Caco-2 (cell line): ENCODE measurements at regions of chr6 and their contacts with region 1.

Region 1: GRCh38 chr6:95203153-95203754 is 374.1 kb upstream of the MANEA start:
- DNase-seq: peak in 1 of 2 experiments; percentile 31
- H3K4me3 ChIP-seq: no peak overlapping the region
- H3K4me3 Mint-ChIP-seq: no peak overlapping the region
- H3K27ac Mint-ChIP-seq: no peak overlapping the region
- H3K4me1 ChIP-seq: no peaks in the 10 kb centered on the region
- H3K4me1 Mint-ChIP-seq: no peaks in the 10 kb centered on the region
- H3K27me3 ChIP-seq: no peaks in the 10 kb centered on the region
- H3K27me3 Mint-ChIP-seq: no peaks in the 10 kb centered on the region
- CTCF ChIP-seq: peak; percentile 68 to 75

Region 2: DNA sequence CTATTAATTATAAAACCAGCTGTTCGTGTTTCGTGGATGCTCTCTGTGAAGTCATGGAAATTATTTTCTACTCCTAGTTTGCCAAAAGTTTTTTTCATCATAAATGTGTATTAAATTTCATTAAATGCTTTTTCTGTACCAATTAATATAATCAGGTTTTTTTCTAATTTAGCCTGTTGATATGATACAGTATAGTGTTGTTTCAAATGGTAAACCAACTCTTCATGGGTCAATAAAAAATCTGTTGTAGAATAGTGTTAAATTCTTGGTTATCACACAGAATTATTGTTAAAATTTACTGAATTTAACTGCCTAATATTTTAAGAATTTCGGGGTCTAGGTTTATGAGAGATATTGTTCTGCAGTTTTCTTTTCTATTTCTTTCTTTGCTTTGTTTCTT is 131.8 kb before region 1 on chr6:
- CTCF ChIA-PET with region 1: no interaction called
- POLR2A ChIA-PET with region 1: no interaction called
- intact Hi-C with region 1: no loop called
- DNase-seq: no peak
- H3K4me3 ChIP-seq: no peak overlapping the region
- H3K4me3 Mint-ChIP-seq: no peak overlapping the region
- H3K27ac Mint-ChIP-seq: no peak overlapping the region
- H3K4me1 ChIP-seq: no peaks in the 10 kb centered on the region
- H3K4me1 Mint-ChIP-seq: no peaks in the 10 kb centered on the region
- H3K27me3 ChIP-seq: no peaks in the 10 kb centered on the region
- H3K27me3 Mint-ChIP-seq: no peaks in the 10 kb centered on the region
- CTCF ChIP-seq: no peak

Region 3: DNA sequence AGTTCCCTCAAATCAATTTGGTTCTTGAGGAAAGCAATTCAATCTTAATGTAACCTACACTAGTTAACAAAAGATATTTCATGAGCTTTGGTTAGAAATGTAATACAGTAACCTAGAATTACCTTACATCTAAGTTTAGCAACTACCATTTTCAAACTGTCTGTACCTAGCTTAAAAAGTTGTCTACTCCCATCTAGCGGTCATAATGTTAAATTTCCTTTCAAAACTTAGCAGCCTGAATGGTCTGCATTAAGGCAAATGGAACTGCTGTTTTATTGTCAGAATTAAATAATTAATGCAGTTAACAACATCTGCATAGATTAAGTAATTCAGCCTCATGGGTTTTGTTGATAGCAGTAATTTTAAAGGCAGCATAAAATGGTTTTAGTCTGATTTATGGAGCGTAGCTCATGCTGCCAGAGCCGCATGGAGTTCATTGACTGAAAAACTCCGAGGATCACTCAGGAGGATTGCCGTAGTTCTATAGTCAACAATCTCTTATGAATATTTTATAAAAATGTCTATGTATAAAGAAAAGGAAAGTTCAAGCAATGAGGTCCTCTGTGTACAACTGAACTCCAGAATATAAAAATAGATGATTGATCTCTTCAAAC is 111.3 kb before region 1 on chr6:
- CTCF ChIA-PET with region 1: no interaction called
- POLR2A ChIA-PET with region 1: no interaction called
- intact Hi-C with region 1: no loop called
- DNase-seq: peak in 1 of 2 experiments; percentile 26
- H3K4me3 ChIP-seq: no peak overlapping the region
- H3K4me3 Mint-ChIP-seq: no peak overlapping the region
- H3K27ac Mint-ChIP-seq: no peak overlapping the region
- H3K4me1 ChIP-seq: peaks cover 4% of the 10 kb centered on the region; the same call in 1 of the 2 replicates
- H3K4me1 Mint-ChIP-seq: peaks cover 15% of the 10 kb centered on the region
- H3K27me3 ChIP-seq: no peaks in the 10 kb centered on the region
- H3K27me3 Mint-ChIP-seq: no peaks in the 10 kb centered on the region
- CTCF ChIP-seq: peak; percentile 47 to 57

Region 4: DNA sequence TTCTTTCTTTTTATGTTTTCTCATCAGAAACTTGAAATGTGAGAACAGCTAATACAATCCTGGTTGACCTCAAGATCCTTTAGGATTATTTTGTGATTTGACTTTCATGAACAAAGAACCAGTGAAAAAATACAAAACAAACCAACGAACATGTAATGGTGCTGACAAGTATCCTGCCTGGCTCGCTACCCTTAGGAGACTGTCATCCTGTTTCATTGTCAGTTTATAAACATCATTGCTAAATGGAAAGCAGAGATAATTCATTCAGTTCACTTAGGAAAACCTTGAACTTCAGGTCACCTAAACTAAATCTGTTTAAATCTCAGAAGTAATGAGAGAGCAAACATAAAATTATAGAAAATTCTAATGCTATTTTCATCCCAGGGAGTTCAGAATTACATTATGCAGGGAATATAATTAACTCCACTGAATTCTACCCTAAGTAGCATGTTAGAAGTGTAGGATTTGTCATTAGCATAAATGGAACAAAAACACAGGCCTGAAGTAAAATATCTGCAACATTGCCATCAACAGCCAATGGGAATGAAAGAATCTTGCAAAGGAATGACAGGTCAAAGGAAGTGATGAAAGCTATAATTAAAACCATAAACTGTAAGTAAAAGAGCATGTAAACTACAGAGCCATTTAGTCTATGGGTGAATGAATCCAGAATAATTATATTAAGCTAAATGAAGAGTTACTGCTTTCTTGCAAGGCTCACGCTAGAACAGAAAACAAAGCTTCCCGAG is 27.2 kb before region 1 on chr6:
- CTCF ChIA-PET with region 1: no interaction called
- POLR2A ChIA-PET with region 1: no interaction called
- intact Hi-C with region 1: no loop called
- DNase-seq: no peak
- H3K4me3 ChIP-seq: no peak overlapping the region
- H3K4me3 Mint-ChIP-seq: no peak overlapping the region
- H3K27ac Mint-ChIP-seq: no peak overlapping the region
- H3K4me1 ChIP-seq: no peaks in the 10 kb centered on the region
- H3K4me1 Mint-ChIP-seq: no peaks in the 10 kb centered on the region
- H3K27me3 ChIP-seq: no peaks in the 10 kb centered on the region
- H3K27me3 Mint-ChIP-seq: no peaks in the 10 kb centered on the region
- CTCF ChIP-seq: no peak

Region 5: GRCh38 chr6:95280690-95281273 is 77.5 kb after region 1 on chr6:
- CTCF ChIA-PET with region 1: interaction called, 6 read pairs
- POLR2A ChIA-PET with region 1: no interaction called
- intact Hi-C with region 1: loop called (anchors 1 kb)
- DNase-seq: peak in 1 of 2 experiments; percentile 25
- H3K4me3 ChIP-seq: no peak overlapping the region
- H3K4me3 Mint-ChIP-seq: no peak overlapping the region
- H3K27ac Mint-ChIP-seq: no peak overlapping the region
- H3K4me1 ChIP-seq: no peaks in the 10 kb centered on the region
- H3K4me1 Mint-ChIP-seq: peaks cover 13% of the 10 kb centered on the region
- H3K27me3 ChIP-seq: no peaks in the 10 kb centered on the region
- H3K27me3 Mint-ChIP-seq: no peaks in the 10 kb centered on the region
- CTCF ChIP-seq: peak in 1 of 2 experiments; percentile 28

Region 6: GRCh38 chr6:95352064-95352795 is 149.0 kb after region 1 on chr6:
- CTCF ChIA-PET with region 1: no interaction called
- POLR2A ChIA-PET with region 1: no interaction called
- intact Hi-C with region 1: loop called (anchors 1 kb)
- DNase-seq: no peak
- H3K4me3 ChIP-seq: no peak overlapping the region
- H3K4me3 Mint-ChIP-seq: no peak overlapping the region
- H3K27ac Mint-ChIP-seq: no peak overlapping the region
- H3K4me1 ChIP-seq: no peaks in the 10 kb centered on the region
- H3K4me1 Mint-ChIP-seq: no peaks in the 10 kb centered on the region
- H3K27me3 ChIP-seq: no peaks in the 10 kb centered on the region
- H3K27me3 Mint-ChIP-seq: no peaks in the 10 kb centered on the region
- CTCF ChIP-seq: peak in 1 of 2 experiments; percentile 9

Region 7: GRCh38 chr6:95408111-95408510 is 204.9 kb after region 1 on chr6:
- CTCF ChIA-PET with region 1: no interaction called
- POLR2A ChIA-PET with region 1: no interaction called
- intact Hi-C with region 1: loop called (anchors 5 kb)
- DNase-seq: no peak
- H3K4me3 ChIP-seq: no peak overlapping the region
- H3K4me3 Mint-ChIP-seq: no peak overlapping the region
- H3K27ac Mint-ChIP-seq: no peak overlapping the region
- H3K4me1 ChIP-seq: no peaks in the 10 kb centered on the region
- H3K4me1 Mint-ChIP-seq: no peaks in the 10 kb centered on the region
- H3K27me3 ChIP-seq: no peaks in the 10 kb centered on the region
- H3K27me3 Mint-ChIP-seq: no peaks in the 10 kb centered on the region
- CTCF ChIP-seq: no peak